Transverse colon (tissue), 4 donors: ENCODE measurements at regions of chr22 and their contacts with region 1.

Region 1: DNA sequence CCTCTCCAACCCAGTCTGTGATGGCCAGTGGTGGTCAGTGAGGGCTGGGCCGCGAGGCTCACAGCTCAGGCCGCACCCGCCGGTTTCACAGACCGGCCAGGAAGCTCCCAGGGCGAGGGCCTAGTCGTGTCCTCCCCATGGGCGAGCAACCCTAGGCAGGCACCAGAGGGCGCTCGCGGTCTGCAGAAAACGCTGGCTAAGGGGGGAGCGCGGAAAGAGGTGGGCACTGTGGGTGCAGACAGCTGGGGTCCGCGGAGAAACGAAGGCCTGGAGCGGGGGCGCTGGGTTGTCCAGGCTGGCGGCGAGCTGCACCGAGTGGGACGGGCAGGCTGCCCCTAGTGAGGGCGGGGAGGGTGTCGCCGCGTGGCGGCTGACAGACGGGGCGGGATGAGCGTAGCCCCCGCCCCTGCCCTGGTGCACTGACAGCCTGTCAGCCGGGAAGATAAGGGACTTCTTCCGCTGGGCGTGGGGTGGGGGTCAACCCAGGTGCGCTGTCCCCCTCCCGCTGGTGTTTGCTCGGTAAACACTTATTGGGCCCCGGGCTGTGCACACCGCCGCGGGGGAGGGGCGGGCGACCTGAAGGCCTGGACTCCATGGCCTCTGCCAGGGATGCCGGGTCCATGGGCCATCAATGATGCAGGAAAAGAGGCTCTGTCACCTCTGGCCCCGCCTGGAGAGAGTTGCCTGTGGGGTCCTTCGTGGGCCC is 7.5 kb downstream of the GP1BB start:
- DNase-seq: peak; percentile 80
- H3K4me3 ChIP-seq: peak overlapping the region in 2 of 4 donors; percentile 28 to 35
- H3K27ac ChIP-seq: no peak overlapping the region
- H3K4me1 ChIP-seq: peaks cover 0 to 8% (median 8%) of the 10 kb centered on the region in 4 donors
- H3K27me3 ChIP-seq: peaks cover 8% of the 10 kb centered on the region
- CTCF ChIP-seq: peak; percentile 95 to 96 (median 96)
- EP300 ChIP-seq: no peak
- POLR2A ChIP-seq: no peak

Region 2: DNA sequence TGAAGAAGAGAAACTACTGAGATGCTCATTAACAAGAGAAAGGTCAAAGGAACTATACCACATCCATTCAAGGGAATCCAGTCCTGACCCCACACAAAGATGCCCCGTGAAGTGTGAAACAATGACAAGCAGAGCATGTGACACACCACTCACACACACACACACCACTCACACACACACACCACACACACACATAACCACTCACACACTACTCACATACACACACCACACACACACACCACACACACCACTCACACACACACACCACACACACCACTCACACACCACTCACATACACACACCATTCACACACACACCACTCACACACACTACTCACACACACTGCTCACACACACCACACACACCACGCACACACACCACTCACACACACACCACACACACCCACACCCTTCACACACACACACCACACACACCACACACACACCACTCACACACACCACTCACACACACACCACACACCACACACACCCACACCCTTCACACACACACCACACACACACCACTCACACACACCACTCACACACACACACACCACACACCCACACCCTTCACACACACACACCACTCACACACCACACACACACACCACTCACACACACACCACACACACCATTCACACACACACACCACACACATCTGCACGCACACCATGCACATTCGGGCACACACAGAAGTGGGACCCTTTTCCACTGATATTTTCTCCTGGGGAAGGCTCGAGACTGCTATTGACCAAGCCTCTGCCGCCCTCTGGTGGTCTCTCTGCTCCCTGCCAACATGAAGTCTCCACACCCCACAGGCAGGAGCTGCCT is 178.8 kb after region 1 on chr22:
- in situ Hi-C with region 1: loop called in 3 of 4 experiments (anchors 5 kb)
- intact Hi-C with region 1: loop called (anchors 2 kb)
- DNase-seq: peak; percentile 85
- H3K4me3 ChIP-seq: no peak overlapping the region
- H3K27ac ChIP-seq: no peak overlapping the region
- H3K4me1 ChIP-seq: no peaks in the 10 kb centered on the region
- H3K27me3 ChIP-seq: no peaks in the 10 kb centered on the region
- CTCF ChIP-seq: peak; percentile 80 to 95 (median 89)
- EP300 ChIP-seq: no peak
- POLR2A ChIP-seq: no peak